T-cell (primary cell): ENCODE measurements at regions of chr1 and their contacts with region 1.

Region 1: DNA sequence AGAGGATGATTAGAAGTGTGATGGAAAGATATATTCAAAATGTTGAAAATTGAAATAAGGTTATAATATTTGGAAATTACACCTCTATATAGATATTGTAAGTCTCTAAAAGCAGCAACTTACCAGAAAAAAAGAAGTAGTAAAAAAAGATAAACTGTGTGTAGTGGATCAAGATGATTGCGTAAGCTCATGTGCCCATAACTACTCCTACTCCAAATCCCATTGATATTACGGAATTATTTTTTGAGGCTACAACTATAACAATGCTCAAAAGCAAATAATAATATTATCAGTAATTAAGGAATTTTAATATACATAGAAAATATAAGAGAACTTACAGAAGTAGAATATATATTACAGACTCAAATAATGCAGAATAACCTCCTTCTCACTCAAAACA is 33.6 kb downstream of the CATSPERE start:
- DNase-seq: no peak
- ATAC-seq: no peak
- H3K4me3 ChIP-seq: no peak overlapping the region
- H3K4me3 Mint-ChIP-seq: no peak overlapping the region
- H3K27ac ChIP-seq: no peak overlapping the region
- H3K27ac Mint-ChIP-seq: no peak overlapping the region
- H3K4me1 ChIP-seq: no peaks in the 10 kb centered on the region
- H3K4me1 Mint-ChIP-seq: no peaks in the 10 kb centered on the region
- H3K27me3 ChIP-seq: no peaks in the 10 kb centered on the region
- H3K27me3 Mint-ChIP-seq: no peaks in the 10 kb centered on the region

Region 2: DNA sequence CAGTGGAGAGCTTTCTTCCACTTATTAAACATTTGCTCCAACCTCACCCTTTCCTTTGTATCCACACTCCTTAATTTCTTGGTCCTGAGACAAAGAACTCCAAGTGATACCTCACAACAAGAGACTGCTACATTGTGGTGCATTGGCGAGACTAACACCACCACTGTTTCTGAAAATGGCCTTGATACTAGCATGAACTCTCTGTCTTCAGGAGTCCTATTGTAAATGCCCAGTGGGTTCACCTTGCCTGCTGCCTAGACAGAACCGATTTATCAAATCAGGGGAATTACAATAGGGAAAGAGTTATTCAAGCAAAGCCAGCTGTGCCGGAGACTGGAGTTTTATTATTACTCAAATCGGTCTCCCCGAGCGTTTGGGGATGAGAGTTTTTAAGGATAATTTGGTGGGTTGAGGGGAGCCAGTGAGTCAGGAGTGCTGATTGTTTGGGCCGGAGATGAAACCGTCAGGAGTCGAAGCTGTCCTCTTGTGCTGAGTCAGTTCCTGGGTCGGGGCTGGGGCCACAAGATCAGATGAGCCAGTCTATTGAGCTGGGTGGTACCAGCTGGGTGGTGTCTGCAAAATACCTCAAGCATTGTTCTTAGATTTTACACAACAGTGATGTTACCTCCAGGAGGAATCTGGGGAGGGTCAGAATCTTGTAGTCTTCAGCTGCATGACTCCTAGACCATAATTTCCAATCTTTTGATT is 241.3 kb after region 1 on chr1:
- CTCF ChIA-PET with region 1: interaction called in 1 of 2 experiments, 12 read pairs
- POLR2A ChIA-PET with region 1: no interaction called
- DNase-seq: no peak
- ATAC-seq: no peak
- H3K4me3 ChIP-seq: no peak overlapping the region
- H3K4me3 Mint-ChIP-seq: no peak overlapping the region
- H3K27ac ChIP-seq: no peak overlapping the region
- H3K27ac Mint-ChIP-seq: no peak overlapping the region
- H3K4me1 ChIP-seq: peaks cover 0 to 2% of the 10 kb centered on the region in 2 experiments
- H3K4me1 Mint-ChIP-seq: peaks cover 2 to 3% (median 2%) of the 10 kb centered on the region in 3 donors
- H3K27me3 ChIP-seq: peaks cover 0 to 14% of the 10 kb centered on the region in 2 experiments
- H3K27me3 Mint-ChIP-seq: peaks cover 0 to 9% of the 10 kb centered on the region in 2 donors